Naive thymus-derived CD4-positive, alpha-beta T cell (primary cell): ENCODE measurements at regions of chr5 and their contacts with region 1.

Region 1: DNA sequence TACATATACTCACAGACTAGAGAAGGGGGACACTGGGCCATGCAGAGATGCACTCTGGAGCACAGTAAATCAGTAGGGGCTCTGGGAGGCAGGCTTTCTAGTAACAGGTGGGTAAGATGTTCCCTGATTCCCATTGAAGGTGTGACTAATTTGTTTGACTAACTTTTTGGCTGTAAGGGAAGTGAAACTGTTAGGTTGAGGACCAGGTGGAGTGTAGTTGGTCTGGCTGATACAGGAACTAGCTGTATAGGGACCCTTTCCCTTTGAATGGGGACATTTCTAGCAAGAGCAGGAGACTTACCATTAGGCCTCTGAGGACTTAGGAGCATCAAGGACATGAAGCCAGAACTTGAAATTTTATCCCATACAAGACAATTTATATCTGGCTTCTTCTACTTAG is 989.6 kb upstream of the COX7C start:
- DNase-seq: no peak
- ATAC-seq: no peak
- H3K4me3 ChIP-seq: no peak overlapping the region
- H3K4me3 Mint-ChIP-seq: no peak overlapping the region
- H3K27ac ChIP-seq: no peak overlapping the region
- H3K27ac Mint-ChIP-seq: no peak overlapping the region
- H3K4me1 ChIP-seq: no peaks in the 10 kb centered on the region
- H3K4me1 Mint-ChIP-seq: no peaks in the 10 kb centered on the region
- H3K27me3 ChIP-seq: no peaks in the 10 kb centered on the region
- H3K27me3 Mint-ChIP-seq: no peaks in the 10 kb centered on the region

Region 2: GRCh38 chr5:85614489-85614888 is 13.7 kb before region 1 on chr5:
- CTCF ChIA-PET with region 1: no interaction called
- POLR2A ChIA-PET with region 1: no interaction called
- intact Hi-C with region 1: no loop called
- DNase-seq: no peak
- ATAC-seq: no peak
- H3K4me3 ChIP-seq: no peak overlapping the region
- H3K4me3 Mint-ChIP-seq: no peak overlapping the region
- H3K27ac ChIP-seq: no peak overlapping the region
- H3K27ac Mint-ChIP-seq: no peak overlapping the region
- H3K4me1 ChIP-seq: no peaks in the 10 kb centered on the region
- H3K4me1 Mint-ChIP-seq: no peaks in the 10 kb centered on the region
- H3K27me3 ChIP-seq: no peaks in the 10 kb centered on the region
- H3K27me3 Mint-ChIP-seq: no peaks in the 10 kb centered on the region

Region 3: DNA sequence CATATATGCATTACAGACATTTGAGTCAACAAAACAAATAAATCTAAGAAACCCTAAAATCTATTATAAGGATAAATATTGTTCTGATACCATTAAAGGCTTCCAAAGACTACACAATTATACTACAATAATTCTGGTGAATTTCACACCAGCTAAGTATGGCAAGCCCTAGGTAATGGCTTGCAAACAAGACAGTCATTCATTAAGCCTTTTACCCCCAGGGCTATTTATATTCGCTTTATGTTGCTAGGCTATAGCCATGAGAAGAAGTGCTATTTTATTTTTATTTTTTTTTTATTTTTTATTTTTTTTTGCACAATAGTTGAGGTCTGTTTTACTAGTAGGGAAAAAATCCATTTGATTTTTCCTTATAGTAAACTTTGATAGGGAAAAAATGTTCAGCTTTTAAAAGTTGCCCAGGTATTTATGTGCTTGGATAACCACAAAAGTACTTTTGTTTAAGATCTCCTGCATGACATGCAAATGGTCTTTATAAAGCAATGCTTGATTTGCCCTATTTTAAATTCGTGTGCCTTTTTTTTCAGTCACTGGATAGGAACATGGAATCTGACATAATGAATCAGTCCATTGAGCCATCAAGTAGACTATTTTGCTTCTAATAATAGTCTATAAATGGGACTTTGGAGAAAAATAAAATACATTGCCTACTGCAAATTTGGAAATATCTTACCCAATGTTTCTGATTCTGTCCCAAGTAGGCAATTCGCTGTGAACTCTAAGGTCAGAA is 43.2 kb after region 1 on chr5:
- CTCF ChIA-PET with region 1: no interaction called
- POLR2A ChIA-PET with region 1: no interaction called
- intact Hi-C with region 1: loop called in 1 of 2 experiments (anchors 10 kb)
- DNase-seq: no peak
- ATAC-seq: no peak
- H3K4me3 ChIP-seq: no peak overlapping the region
- H3K4me3 Mint-ChIP-seq: no peak overlapping the region
- H3K27ac ChIP-seq: no peak overlapping the region
- H3K27ac Mint-ChIP-seq: no peak overlapping the region
- H3K4me1 ChIP-seq: no peaks in the 10 kb centered on the region
- H3K4me1 Mint-ChIP-seq: no peaks in the 10 kb centered on the region
- H3K27me3 ChIP-seq: no peaks in the 10 kb centered on the region
- H3K27me3 Mint-ChIP-seq: no peaks in the 10 kb centered on the region